Mammary epithelial cell (primary cell): ENCODE measurements at regions of chr3 and their contacts with region 1.

Region 1: DNA sequence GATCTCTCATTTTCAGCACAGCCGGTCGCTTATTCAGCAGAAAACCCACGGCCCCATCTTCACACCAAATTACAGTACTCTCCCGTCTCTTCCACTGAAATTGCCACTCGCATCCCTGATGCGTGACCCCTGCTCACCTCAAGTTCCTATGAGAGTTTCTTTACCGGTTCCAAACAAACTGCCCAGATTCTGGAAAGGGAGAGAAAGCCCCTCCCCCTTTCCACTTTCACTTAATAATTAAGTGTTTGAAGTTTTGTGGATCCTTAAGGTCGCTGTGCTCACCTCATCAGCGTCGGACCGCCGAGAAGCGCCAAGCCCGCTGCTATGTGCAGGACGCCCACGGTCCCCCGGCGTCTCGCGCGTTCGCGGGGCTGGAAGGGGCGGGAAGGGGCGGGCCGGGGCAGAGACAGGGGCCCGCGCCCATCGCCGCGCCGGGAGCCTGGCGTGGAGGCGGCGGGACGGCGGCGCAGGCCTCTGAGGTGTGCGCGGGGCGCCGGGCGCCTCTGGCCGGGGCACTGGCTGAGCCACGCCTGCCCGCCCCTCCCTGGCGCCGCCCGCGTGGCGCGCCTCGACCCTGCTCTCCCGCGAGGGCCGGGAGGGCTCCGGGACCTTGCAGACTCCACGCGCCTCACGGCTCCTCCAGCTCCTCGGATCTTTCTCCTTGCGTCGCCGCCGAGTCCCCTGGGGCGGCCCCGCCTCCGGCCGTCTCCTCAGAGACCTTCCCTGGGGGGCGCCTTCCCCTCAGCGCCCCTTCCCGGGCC is at the start of gene GPR156:
- DNase-seq: no peak
- H3K4me3 ChIP-seq: peak within 1 kb of the TSS; percentile 20 to 56 (median 47)
- H3K27ac ChIP-seq: no peak within 1 kb of the TSS
- H3K4me1 ChIP-seq: peaks cover 7% of the 10 kb centered on the region
- H3K27me3 ChIP-seq: peaks cover 5% of the 10 kb centered on the region
- CTCF ChIP-seq: no peak
- total RNA-seq, gene GPR156: 0.56 to 1.2 TPM

Region 2: DNA sequence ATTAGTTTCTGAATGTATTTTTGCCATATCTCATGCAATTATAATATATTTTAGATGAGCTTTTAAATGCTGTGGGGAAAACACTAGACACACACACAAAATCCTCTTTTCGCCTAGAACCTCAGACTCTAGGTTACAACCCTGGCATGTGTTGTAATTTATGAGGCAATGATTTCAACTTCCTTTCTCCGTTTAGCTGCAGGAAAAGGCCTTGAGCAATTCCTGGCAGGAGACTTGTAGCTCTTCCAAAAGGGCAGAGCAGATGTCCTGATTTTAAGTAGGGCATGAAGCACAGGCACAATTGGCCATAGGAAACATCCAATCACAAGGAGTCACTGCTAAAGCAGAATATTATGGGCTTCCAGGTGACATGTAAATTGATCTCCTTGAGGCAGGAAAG is 81.9 kb before region 1 on chr3:
- CTCF ChIA-PET with region 1: no interaction called
- dilution Hi-C with region 1: no loop called
- in situ Hi-C with region 1: no loop called
- intact Hi-C with region 1: no loop called
- DNase-seq: peak; percentile 40
- H3K4me3 ChIP-seq: no peak overlapping the region
- H3K27ac ChIP-seq: no peak overlapping the region
- H3K4me1 ChIP-seq: peaks cover 4% of the 10 kb centered on the region
- H3K27me3 ChIP-seq: no peaks in the 10 kb centered on the region
- CTCF ChIP-seq: no peak

Region 3: DNA sequence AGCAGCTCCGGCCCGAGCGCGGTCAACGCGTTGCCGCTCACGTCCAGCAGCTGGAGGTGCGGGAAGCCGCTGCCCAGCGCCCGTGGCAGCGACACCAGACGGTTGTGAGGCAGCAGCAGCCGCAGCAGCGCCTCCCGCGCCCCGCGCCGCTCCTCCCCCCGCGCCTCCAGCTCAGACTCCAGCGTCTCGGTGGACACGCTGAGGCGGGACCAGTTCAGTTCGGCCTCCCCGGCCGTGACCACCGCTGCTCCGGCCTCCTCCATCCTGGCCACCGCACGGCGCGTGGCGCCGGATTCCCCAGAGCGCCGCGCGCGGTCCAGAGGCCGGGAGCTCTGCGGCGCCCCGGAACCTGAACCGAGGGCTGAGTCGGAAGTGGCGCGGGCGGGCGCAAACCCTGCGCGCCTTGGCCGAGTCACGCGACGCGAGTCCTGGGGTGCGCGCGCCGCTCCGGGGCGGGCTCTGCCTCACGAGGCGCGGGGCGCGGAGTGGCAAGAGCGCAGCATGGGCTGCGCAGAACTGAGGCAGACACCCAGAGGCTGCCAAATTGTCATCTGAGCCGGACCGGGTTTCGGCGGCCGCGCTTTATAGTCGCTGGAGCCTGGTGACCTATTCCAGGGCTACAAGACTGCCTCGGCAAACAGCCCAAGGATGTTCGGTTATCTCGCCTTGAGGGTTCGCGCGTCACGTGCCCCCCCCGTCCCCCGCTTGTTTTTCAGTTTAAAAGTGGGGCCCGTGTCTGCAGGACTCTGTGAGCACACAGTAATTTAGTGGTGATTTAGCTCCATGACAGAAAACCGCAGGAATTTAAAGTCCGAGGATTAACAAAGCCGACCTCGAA is 64.3 kb after region 1 on chr3 and contains the start of gene LRRC58:
- CTCF ChIA-PET with region 1: no interaction called
- dilution Hi-C with region 1: no loop called
- in situ Hi-C with region 1: no loop called
- intact Hi-C with region 1: loop called (anchors 5 kb)
- DNase-seq: peak; percentile 95
- H3K4me3 ChIP-seq: peak within 1 kb of the TSS; percentile 85 to 95 (median 85)
- H3K27ac ChIP-seq: peak within 1 kb of the TSS; percentile 76
- H3K4me1 ChIP-seq: peaks cover 8% of the 10 kb centered on the region
- H3K27me3 ChIP-seq: no peaks in the 10 kb centered on the region
- CTCF ChIP-seq: peak in 1 of 2 donors; percentile 40
- total RNA-seq, gene LRRC58: 21.3 to 28.2 TPM